CD4-positive, alpha-beta T cell (primary cell): ENCODE measurements at regions of chr3 and their contacts with region 1.

Region 1: DNA sequence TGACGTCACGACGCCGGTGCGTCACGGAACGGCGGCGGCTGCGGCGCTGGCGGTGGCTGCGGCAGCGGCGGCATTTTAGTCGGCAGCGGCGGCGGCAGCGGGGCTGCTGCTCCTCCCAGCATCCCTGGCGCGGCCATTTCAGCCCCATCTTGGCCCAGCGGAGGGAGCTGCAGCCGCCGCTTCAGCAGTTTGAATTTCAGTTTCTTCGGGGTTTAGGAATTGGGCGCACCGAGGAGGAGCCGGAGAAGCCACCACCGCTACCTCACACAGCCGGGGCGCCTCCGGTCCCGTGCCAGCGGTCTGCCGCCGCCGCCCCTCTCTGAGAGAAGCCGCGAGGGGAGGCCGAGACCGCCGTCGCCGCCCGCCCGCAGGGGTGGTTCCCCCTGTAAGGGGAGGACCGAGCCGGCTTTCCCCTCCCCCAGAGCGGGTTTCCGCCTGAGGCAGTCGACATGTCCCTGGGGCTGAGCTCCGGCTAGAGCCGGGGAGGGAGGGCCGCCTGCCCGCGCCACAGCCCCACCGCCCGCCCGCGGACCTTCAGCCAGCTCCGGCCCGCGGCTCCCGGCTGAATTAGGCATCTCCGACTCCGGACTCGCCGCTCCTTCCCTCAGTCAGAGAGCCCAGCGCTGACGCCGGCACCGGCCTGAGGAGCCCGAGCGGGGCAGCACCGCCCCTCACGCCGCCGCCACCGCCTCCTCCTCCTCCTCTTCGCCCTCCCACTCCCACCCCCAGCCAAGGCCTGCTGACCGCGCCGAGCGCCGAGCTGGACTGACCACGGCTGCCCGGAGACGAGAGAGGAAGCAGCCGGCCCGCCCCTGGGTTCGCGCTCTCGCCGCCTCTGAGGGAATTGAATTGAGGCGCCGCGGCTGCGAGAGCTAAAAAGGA is at the start of gene TSC22D2:
- DNase-seq: peak; percentile 93 to 99 (median 97)
- ATAC-seq: peak; percentile 69
- H3K4me3 ChIP-seq: peak within 1 kb of the TSS; percentile 93
- H3K4me3 Mint-ChIP-seq: peak within 1 kb of the TSS; percentile 100
- H3K27ac ChIP-seq: peak within 1 kb of the TSS; percentile 93 to 98
- H3K27ac Mint-ChIP-seq: peak within 1 kb of the TSS; percentile 94
- H3K4me1 ChIP-seq: peaks cover 5% of the 10 kb centered on the region
- H3K4me1 Mint-ChIP-seq: peaks cover 42% of the 10 kb centered on the region
- H3K27me3 ChIP-seq: no peaks in the 10 kb centered on the region
- H3K27me3 Mint-ChIP-seq: no peaks in the 10 kb centered on the region
- CTCF ChIP-seq: no peak
- total RNA-seq, gene TSC22D2: 47.3 to 49.3 TPM

Region 2: GRCh38 chr3:149812606-149813366 is 595.7 kb before region 1 on chr3 and contains the start of gene RNF13:
- CTCF ChIA-PET with region 1: interaction called, 3 read pairs
- POLR2A ChIA-PET with region 1: interaction called, 4 read pairs
- intact Hi-C with region 1: loop called in 1 of 2 experiments (anchors 10 kb)
- DNase-seq: peak; percentile 82 to 95 (median 90)
- ATAC-seq: peak; percentile 95
- H3K4me3 ChIP-seq: peak within 1 kb of the TSS; percentile 78
- H3K4me3 Mint-ChIP-seq: peak within 1 kb of the TSS; percentile 98
- H3K27ac ChIP-seq: peak within 1 kb of the TSS; percentile 86 to 95
- H3K27ac Mint-ChIP-seq: peak within 1 kb of the TSS; percentile 96
- H3K4me1 ChIP-seq: peaks cover 23% of the 10 kb centered on the region
- H3K4me1 Mint-ChIP-seq: peaks cover 60% of the 10 kb centered on the region
- H3K27me3 ChIP-seq: no peaks in the 10 kb centered on the region
- H3K27me3 Mint-ChIP-seq: peaks cover 4% of the 10 kb centered on the region
- CTCF ChIP-seq: no peak
- total RNA-seq, gene RNF13: 39.1 to 44.1 TPM

Region 3: DNA sequence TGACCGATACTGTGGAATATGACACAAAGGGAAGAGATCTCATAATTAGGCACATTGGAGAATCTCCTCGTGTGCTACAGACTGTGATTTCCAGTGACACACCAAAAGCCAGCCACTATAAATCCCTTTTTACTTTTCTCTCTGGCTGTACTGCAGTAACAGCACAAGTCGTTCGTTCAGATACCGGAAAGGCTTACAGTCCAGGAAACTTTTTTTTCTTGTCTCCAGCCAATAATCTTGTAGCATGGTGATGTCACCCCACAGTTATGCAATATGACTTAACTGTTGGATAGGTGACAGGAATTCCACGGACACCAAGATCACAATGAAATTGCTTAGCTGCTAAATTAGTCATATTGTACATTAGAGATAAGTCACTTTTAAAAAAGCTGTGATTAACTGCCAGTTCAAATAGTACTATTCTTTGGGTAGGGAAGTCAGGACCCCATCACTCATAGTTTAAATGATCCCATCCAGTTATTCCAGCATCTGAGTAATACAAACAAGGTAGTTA is 36.7 kb before region 1 on chr3:
- CTCF ChIA-PET with region 1: no interaction called
- POLR2A ChIA-PET with region 1: no interaction called
- intact Hi-C with region 1: loop called in 1 of 2 experiments (anchors 5 kb)
- DNase-seq: peak in 2 of 14 experiments; percentile 8 to 18
- ATAC-seq: no peak
- H3K4me3 ChIP-seq: no peak overlapping the region
- H3K4me3 Mint-ChIP-seq: no peak overlapping the region
- H3K27ac ChIP-seq: no peak overlapping the region
- H3K27ac Mint-ChIP-seq: no peak overlapping the region
- H3K4me1 ChIP-seq: no peaks in the 10 kb centered on the region
- H3K4me1 Mint-ChIP-seq: no peaks in the 10 kb centered on the region
- H3K27me3 ChIP-seq: no peaks in the 10 kb centered on the region
- H3K27me3 Mint-ChIP-seq: no peaks in the 10 kb centered on the region
- CTCF ChIP-seq: no peak

Region 4: DNA sequence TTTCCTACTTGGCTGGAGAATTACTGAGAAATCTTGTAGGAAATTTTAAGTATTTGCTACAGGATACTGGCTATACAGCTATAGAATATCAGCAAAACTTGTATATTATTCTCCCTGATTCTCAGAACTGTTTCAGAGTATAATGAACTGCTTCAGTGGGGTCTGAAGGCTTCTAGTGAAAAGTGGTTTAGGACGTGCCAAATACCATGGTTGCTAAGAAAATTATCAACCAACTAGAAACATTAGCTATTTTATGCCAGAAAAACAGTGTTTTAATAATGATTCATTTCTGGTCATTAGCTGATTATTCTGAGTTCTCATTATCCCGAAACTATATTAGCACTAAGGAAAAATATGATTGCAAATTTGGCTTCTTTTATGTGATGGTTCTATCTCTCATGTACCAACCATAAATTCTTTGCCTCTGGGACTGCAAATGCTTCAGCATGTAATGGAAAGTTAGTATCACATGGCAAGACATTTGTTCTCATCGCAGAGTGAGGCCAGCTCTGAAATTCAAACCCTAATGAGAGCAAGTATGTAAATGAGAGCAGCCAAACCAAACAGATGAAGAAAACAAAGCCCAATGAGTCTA is 11.4 kb before region 1 on chr3:
- CTCF ChIA-PET with region 1: interaction called, 8 read pairs
- POLR2A ChIA-PET with region 1: interaction called, 18 read pairs
- intact Hi-C with region 1: no loop called
- DNase-seq: no peak
- ATAC-seq: no peak
- H3K4me3 ChIP-seq: no peak overlapping the region
- H3K4me3 Mint-ChIP-seq: no peak overlapping the region
- H3K27ac ChIP-seq: no peak overlapping the region
- H3K27ac Mint-ChIP-seq: no peak overlapping the region
- H3K4me1 ChIP-seq: no peaks in the 10 kb centered on the region
- H3K4me1 Mint-ChIP-seq: no peaks in the 10 kb centered on the region
- H3K27me3 ChIP-seq: no peaks in the 10 kb centered on the region
- H3K27me3 Mint-ChIP-seq: peaks cover 12% of the 10 kb centered on the region
- CTCF ChIP-seq: no peak

Region 5: DNA sequence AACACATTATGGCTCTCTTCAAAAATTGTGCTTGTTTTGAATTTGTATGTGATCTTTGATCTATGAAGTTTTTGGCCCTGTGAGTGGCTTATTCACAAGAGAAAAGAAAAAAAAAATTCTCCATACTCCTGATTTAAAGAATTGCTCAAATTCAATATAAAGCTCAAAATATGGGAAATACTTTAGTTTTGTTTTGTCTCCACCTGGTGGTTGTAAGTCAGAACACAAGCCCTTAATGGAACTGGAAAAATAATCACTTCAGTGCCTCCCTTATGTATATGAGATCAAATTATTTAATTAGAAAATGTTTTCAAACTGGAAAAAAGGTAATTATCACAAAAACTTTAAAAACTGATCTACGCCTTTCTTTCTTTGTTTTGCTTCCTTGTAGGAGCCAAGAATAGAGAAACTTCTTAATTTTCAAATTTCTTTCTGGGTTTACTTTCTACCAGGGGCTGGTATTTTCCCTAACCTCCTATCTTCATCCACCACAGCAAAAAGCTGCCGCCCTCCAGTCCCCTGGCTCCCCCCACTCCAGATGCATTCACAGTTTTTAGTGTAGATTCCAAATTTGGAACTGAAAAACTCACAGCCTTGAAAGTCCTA is 87.2 kb after region 1 on chr3:
- CTCF ChIA-PET with region 1: interaction called, 7 read pairs
- POLR2A ChIA-PET with region 1: interaction called, 20 read pairs
- intact Hi-C with region 1: loop called (anchors 1 to 2 kb)
- DNase-seq: peak in 5 of 14 experiments; percentile 3 to 74 (median 63)
- ATAC-seq: peak; percentile 64
- H3K4me3 ChIP-seq: no peak overlapping the region
- H3K4me3 Mint-ChIP-seq: no peak overlapping the region
- H3K27ac ChIP-seq: no peak overlapping the region
- H3K27ac Mint-ChIP-seq: no peak overlapping the region
- H3K4me1 ChIP-seq: no peaks in the 10 kb centered on the region
- H3K4me1 Mint-ChIP-seq: no peaks in the 10 kb centered on the region
- H3K27me3 ChIP-seq: no peaks in the 10 kb centered on the region
- H3K27me3 Mint-ChIP-seq: no peaks in the 10 kb centered on the region
- CTCF ChIP-seq: peak; percentile 85

Region 6: GRCh38 chr3:150703299-150704134 is 295.1 kb after region 1 on chr3 and contains the start of gene ERICH6:
- CTCF ChIA-PET with region 1: no interaction called
- POLR2A ChIA-PET with region 1: interaction called, 13 read pairs
- intact Hi-C with region 1: loop called in 1 of 2 experiments (anchors 5 kb)
- DNase-seq: peak; percentile 54 to 90 (median 69)
- ATAC-seq: peak; percentile 71
- H3K4me3 ChIP-seq: peak within 1 kb of the TSS; percentile 90
- H3K4me3 Mint-ChIP-seq: peak within 1 kb of the TSS; percentile 99
- H3K27ac ChIP-seq: peak within 1 kb of the TSS; percentile 77 to 89
- H3K27ac Mint-ChIP-seq: peak within 1 kb of the TSS; percentile 99
- H3K4me1 ChIP-seq: peaks cover 17% of the 10 kb centered on the region
- H3K4me1 Mint-ChIP-seq: peaks cover 26% of the 10 kb centered on the region
- H3K27me3 ChIP-seq: no peaks in the 10 kb centered on the region
- H3K27me3 Mint-ChIP-seq: no peaks in the 10 kb centered on the region
- CTCF ChIP-seq: no peak
- total RNA-seq, gene ERICH6: not detected